Activated T-helper 2 cell treated with anti-CD3 and anti-CD28 coated beads, Interferon-gamma antibody, Interleukin-2, Interleukin-4, amounts not matched to agents 10 μg/mL and 5 μg/mL and 100 μg/mL, durations not matched to agents 14 hours and 24 hours and 36 hours (primary cell): ENCODE measurements at regions of chr9 and their contacts with region 1.

Region 1: DNA sequence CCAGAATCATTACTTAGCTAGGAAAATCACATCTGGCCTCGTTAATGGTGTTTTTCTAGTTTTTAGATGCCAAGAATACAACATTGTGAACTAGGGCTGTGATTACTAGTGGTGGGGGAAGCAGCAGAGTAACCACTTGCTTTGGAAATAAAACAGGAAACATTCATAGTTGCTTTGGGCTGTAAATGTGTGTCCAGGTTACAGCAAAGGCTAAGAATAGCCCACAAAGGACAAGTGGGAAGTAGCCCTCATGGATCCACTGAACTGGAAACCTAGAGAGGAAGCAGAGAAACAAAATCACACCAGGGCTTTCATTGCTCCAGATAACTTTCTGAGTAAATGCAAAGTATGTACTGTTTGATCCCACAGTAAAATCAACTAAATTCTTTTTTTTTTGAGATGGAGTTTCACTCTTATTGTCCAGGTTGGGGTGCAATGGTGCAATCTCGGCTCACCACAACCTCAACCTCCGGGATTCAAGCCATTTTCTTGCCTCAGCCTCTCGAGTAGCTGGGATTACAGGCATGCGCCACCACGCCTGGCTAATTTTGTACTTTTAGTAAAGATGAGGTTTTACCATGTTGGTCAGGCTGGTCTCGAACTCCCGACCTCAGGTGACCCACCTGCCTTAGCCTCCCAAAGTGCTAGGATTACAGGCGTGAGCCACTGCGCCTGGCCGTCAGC is 56.2 kb upstream of the TNFSF15 start:
- DNase-seq: no peak
- H3K4me3 Mint-ChIP-seq: no peak overlapping the region
- H3K27ac Mint-ChIP-seq: no peak overlapping the region
- H3K4me1 Mint-ChIP-seq: peaks cover 16% of the 10 kb centered on the region
- H3K27me3 Mint-ChIP-seq: peaks cover 27% of the 10 kb centered on the region

Region 2: DNA sequence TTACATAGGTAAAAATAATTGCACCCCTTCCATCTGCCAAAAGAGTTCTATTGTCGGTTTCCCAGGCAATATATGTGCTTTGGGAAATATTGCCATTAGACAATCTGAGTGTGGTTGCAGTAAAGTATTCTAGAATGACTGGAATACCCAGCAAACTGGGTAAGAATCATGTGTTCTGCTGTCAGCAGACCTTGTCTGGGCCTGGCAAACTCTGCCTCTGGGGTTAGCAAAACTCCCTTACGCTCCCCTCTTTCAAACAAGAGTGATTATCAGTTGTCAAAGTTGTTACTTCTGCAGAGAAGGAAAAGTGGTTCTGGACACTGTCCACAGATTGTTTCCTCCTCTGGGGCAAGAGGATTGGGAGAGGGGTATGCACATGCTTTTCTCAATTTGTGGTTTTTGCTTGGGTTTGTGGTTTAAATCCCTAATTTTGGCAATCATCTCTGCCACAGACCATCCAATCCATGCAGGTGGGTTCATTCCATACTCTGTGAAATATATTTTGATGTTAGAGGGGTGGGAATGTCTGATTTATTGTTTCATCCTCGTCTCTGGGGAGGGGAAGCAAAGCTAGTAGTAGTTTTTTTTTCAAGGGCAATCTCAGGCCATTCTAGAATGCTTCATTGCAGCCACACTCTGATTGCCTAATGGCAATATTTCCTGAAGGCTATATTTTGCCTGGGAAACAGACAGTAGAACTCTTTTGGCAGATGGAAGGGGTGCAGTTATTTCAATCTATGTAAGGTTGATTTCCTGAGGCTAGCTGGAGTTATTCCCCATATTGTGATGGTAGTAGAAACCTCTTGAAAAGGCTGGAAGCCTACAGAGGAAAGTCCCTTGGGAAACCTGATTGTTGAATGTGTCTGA is 32.3 kb before region 1 on chr9:
- intact Hi-C with region 1: loop called (anchors 2 kb)
- DNase-seq: no peak
- H3K4me3 Mint-ChIP-seq: no peak overlapping the region
- H3K27ac Mint-ChIP-seq: no peak overlapping the region
- H3K4me1 Mint-ChIP-seq: peaks cover 23% of the 10 kb centered on the region
- H3K27me3 Mint-ChIP-seq: peaks cover 51% of the 10 kb centered on the region

Region 3: DNA sequence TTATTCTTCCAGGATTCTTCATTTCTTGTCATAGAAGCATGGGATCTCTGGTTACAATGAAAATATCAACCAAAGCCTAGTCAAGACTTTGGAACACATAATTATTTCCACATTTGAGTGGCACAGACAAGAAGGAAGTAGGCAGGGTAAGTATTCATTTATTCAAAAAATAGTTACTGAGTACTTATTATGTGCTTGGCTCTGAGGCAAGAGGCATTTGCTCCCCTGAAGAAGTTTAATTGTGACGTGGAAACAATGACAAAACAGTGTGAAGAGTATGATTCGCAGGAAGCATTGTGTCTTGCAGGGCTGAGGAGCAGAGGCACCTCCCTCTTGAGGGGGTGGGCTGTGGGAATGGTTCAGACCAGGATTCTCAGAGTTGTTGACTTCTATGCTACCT is 11.2 kb before region 1 on chr9:
- intact Hi-C with region 1: loop called (anchors 1 kb)
- DNase-seq: no peak
- H3K4me3 Mint-ChIP-seq: no peak overlapping the region
- H3K27ac Mint-ChIP-seq: peak overlapping the region; percentile 9
- H3K4me1 Mint-ChIP-seq: peaks cover 19% of the 10 kb centered on the region
- H3K27me3 Mint-ChIP-seq: peaks cover 10% of the 10 kb centered on the region